PC-3 (cell line): ENCODE measurements at regions of chr1 and their contacts with region 1.

Region 1: GRCh38 chr1:26695356-26696118 is at the start of gene ARID1A:
- DNase-seq: peak; percentile 96
- ATAC-seq: peak; percentile 52
- H3K4me3 ChIP-seq: peak within 1 kb of the TSS; percentile 86
- H3K27ac ChIP-seq: peak within 1 kb of the TSS; percentile 81
- H3K4me1 ChIP-seq: peaks cover 49% of the 10 kb centered on the region
- H3K27me3 ChIP-seq: no peaks in the 10 kb centered on the region
- CTCF ChIP-seq: no peak
- total RNA-seq, gene ARID1A: 43.8 and 78.0 TPM in 2 replicates

Region 2: GRCh38 chr1:26602378-26602959 is 93.1 kb before region 1 on chr1:
- CTCF ChIA-PET with region 1: no interaction called
- POLR2A ChIA-PET with region 1: no interaction called
- intact Hi-C with region 1: loop called (anchors 1 kb)
- DNase-seq: peak; percentile 87
- ATAC-seq: peak; percentile 49
- H3K4me3 ChIP-seq: no peak overlapping the region
- H3K27ac ChIP-seq: no peak overlapping the region
- H3K4me1 ChIP-seq: peaks cover 7% of the 10 kb centered on the region; the same call in 1 of the 2 replicates
- H3K27me3 ChIP-seq: no peaks in the 10 kb centered on the region
- CTCF ChIP-seq: peak; percentile 93

Region 3: GRCh38 chr1:26677306-26678115 is 18.0 kb before region 1 on chr1:
- CTCF ChIA-PET with region 1: interaction called, 21 read pairs
- POLR2A ChIA-PET with region 1: no interaction called
- intact Hi-C with region 1: no loop called
- DNase-seq: peak; percentile 93
- ATAC-seq: peak; percentile 100
- H3K4me3 ChIP-seq: peak overlapping the region; percentile 27; the same call in 1 of the 2 replicates
- H3K27ac ChIP-seq: no peak overlapping the region
- H3K4me1 ChIP-seq: peaks cover 9% of the 10 kb centered on the region
- H3K27me3 ChIP-seq: no peaks in the 10 kb centered on the region
- CTCF ChIP-seq: peak; percentile 90

Region 4: GRCh38 chr1:26754086-26754874 is 58.7 kb after region 1 on chr1:
- CTCF ChIA-PET with region 1: no interaction called
- POLR2A ChIA-PET with region 1: no interaction called
- intact Hi-C with region 1: loop called (anchors 5 kb)
- DNase-seq: peak; percentile 96
- ATAC-seq: peak; percentile 87
- H3K4me3 ChIP-seq: peak overlapping the region; percentile 32; the same call in 1 of the 2 replicates
- H3K27ac ChIP-seq: peak overlapping the region; percentile 82
- H3K4me1 ChIP-seq: peaks cover 34% of the 10 kb centered on the region
- H3K27me3 ChIP-seq: no peaks in the 10 kb centered on the region
- CTCF ChIP-seq: no peak

Region 5: GRCh38 chr1:26811057-26811456 is 115.5 kb after region 1 on chr1:
- CTCF ChIA-PET with region 1: no interaction called
- POLR2A ChIA-PET with region 1: interaction called, 10 read pairs
- intact Hi-C with region 1: no loop called
- DNase-seq: no peak
- ATAC-seq: no peak
- H3K4me3 ChIP-seq: no peak overlapping the region
- H3K27ac ChIP-seq: no peak overlapping the region
- H3K4me1 ChIP-seq: no peaks in the 10 kb centered on the region
- H3K27me3 ChIP-seq: no peaks in the 10 kb centered on the region
- CTCF ChIP-seq: no peak

Region 6: GRCh38 chr1:26864610-26865527 is 169.3 kb after region 1 on chr1:
- CTCF ChIA-PET with region 1: no interaction called
- POLR2A ChIA-PET with region 1: interaction called, 3 read pairs
- intact Hi-C with region 1: loop called (anchors 10 kb)
- DNase-seq: peak; percentile 99
- ATAC-seq: peak; percentile 64
- H3K4me3 ChIP-seq: peak overlapping the region; percentile 90
- H3K27ac ChIP-seq: peak overlapping the region; percentile 95
- H3K4me1 ChIP-seq: peaks cover 43% of the 10 kb centered on the region
- H3K27me3 ChIP-seq: no peaks in the 10 kb centered on the region
- CTCF ChIP-seq: 0 out of 2 replicates have a peak, but pooled peaks have one; percentile 20